ENCODE measurements at regions of chr12 and their contacts with region 1.

Region 1: DNA sequence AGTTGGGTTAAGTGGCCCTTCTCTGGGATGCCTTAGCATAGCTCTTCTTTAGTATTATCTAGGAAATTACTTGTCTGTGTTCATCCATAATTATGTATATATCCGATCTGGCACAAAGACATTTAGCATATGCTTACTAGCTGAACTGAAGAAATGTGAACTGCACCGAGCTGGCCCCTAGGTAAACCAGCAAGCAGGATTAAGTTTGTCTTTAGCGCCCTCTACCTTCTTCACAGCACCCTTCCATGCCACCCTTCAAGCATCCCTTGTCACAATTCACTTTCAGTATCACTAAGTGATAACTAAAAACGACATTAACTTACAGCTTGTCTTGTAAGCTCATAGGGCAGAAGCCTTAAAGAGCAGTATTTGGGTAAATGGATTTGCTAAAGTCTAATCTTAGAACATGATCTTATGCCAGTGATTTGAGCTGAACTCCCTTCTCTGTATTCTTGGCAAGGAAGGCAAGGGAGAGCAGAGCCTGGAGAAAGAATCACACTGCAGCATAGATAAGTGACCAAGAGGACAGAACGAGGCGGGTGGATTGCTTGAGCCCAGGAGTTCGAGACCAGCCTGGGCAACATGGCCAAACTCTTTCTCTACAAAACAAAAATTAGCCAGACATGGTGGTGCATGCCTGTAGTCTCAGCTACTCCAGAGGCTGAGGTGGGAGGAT is 2.6 kb upstream of the HAL start:
- DNase-seq: peak; percentile 68

Region 2: GRCh38 chr12:95918194-95918993 is 80.4 kb before region 1 on chr12:
- CTCF ChIA-PET with region 1: interaction called, 18 read pairs
- POLR2A ChIA-PET with region 1: no interaction called
- DNase-seq: peak; percentile 74

Region 3: DNA sequence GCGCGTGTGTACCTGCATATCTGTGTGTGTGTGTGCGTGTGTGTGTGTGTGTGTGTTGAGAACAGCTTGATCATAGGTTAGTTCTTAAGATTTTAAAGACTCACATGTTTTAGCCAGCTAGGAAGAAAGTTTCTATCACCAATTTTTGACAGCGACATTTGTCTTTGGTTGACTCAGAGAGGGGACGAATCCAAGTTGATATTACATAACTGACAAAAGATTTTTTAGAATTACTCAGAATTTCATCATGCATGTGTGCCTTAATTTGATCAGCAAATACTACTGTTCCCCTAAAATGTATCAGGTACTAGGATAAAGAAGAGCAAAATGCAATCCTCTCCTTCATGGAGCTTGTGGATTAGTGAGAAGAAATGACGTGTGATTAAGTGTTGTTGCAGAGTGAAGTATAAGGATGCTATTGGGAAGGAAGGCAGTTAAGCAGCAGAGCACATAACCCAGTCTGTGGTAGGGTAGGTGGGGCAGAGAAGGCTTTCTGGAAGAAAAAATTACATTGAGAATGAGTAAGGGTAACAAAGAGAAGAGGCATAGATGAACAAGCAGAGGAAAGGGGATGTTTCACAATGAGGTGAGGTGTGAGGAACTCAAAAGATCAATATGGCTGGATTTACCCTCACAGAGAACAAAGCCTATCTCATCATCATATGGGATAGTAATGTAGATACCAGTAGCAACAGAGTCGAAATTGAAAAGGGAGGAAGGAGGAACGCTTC is 272.9 kb after region 1 on chr12:
- CTCF ChIA-PET with region 1: no interaction called
- POLR2A ChIA-PET with region 1: no interaction called
- DNase-seq: no peak

Measured in HEK293T (cell line).